Right cardiac atrium (tissue), 5 donors: ENCODE measurements at regions of chr2 and their contacts with region 1.

Region 1: GRCh38 chr2:100262555-100263320 is 59.6 kb downstream of the LONRF2 start:
- DNase-seq: peak; percentile 69 to 88 (median 84)
- ATAC-seq: peak; percentile 55 to 72
- H3K4me3 ChIP-seq: no peak overlapping the region
- H3K27ac ChIP-seq: no peak overlapping the region
- H3K4me1 ChIP-seq: no peaks in the 10 kb centered on the region
- H3K27me3 ChIP-seq: no peaks in the 10 kb centered on the region

Region 2: GRCh38 chr2:99559075-99559662 is 703.6 kb before region 1 on chr2:
- intact Hi-C with region 1: loop called in 1 of 4 experiments (anchors 5 kb)
- DNase-seq: peak; percentile 83 to 95 (median 94)
- ATAC-seq: peak; percentile 94 to 95
- H3K4me3 ChIP-seq: no peak overlapping the region
- H3K27ac ChIP-seq: no peak overlapping the region
- H3K4me1 ChIP-seq: no peaks in the 10 kb centered on the region
- H3K27me3 ChIP-seq: no peaks in the 10 kb centered on the region

Region 3: DNA sequence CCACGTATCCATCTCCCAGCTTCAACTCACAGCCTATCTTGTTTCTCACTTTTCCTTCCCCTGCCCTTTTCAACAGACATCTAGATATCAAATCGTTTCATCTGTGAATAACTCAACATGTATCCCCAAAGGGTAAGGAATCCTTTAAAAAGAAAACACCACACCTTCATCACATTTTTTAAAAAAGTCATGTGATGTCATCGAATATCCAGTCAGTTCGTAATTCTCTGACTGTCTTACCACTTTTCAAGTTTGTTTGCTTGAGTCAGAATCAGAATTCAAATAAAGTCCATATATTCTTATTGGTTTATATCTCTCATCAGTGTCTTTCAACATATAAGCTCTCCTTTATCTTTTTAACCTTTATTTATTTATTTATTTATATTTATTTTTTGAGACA is 65.0 kb after region 1 on chr2:
- intact Hi-C with region 1: no loop called
- DNase-seq: no peak
- ATAC-seq: no peak
- H3K4me3 ChIP-seq: no peak overlapping the region
- H3K27ac ChIP-seq: no peak overlapping the region
- H3K4me1 ChIP-seq: no peaks in the 10 kb centered on the region
- H3K27me3 ChIP-seq: no peaks in the 10 kb centered on the region

Region 4: GRCh38 chr2:100381240-100381639 is 118.5 kb after region 1 on chr2:
- intact Hi-C with region 1: loop called (anchors 2 kb)
- DNase-seq: peak; percentile 77 to 87 (median 78)
- ATAC-seq: peak; percentile 67 to 71
- H3K4me3 ChIP-seq: no peak overlapping the region
- H3K27ac ChIP-seq: no peak overlapping the region
- H3K4me1 ChIP-seq: no peaks in the 10 kb centered on the region
- H3K27me3 ChIP-seq: no peaks in the 10 kb centered on the region